ENCODE measurements at regions of chr5 and their contacts with region 1.

Region 1: DNA sequence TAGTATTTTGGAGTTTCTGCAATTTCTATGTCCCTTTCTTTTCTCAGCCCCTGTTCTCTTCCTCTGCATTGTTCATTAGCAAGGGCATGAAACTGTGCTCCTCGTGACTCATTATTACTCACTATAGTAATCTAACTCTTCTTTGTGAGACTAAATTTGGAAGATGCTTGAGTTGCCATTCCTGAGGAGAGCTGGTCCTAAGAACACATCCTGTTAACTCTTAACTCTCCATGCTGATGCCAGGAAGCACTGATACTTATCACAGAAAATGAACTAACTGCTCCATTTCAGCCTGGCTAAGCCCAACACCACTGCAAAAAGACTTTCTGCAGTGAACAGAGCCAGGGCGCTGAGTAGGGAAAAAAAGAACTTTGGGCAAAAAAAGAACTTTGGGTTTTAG is 10.6 kb upstream of the CSNK1A1 start:
- DNase-seq: no peak
- ATAC-seq: no peak
- H3K4me3 ChIP-seq: no peak overlapping the region
- H3K27ac ChIP-seq: no peak overlapping the region
- H3K4me1 ChIP-seq: no peaks in the 10 kb centered on the region
- H3K27me3 ChIP-seq: no peaks in the 10 kb centered on the region
- CTCF ChIP-seq: no peak
- EP300 ChIP-seq: no peak
- POLR2A ChIP-seq: no peak
- RAD21 ChIP-seq: no peak

Region 2: GRCh38 chr5:149317281-149318048 is 244.4 kb before region 1 on chr5:
- CTCF ChIA-PET with region 1: interaction called, 8 read pairs
- POLR2A ChIA-PET with region 1: no interaction called
- RAD21 ChIA-PET with region 1: interaction called, 8 read pairs
- SMC1A ChIA-PET with region 1: no interaction called
- in situ Hi-C with region 1: no loop called
- intact Hi-C with region 1: loop called (anchors 2 kb)
- DNase-seq: no peak
- ATAC-seq: peak; percentile 86
- H3K4me3 ChIP-seq: no peak overlapping the region
- H3K27ac ChIP-seq: no peak overlapping the region
- H3K4me1 ChIP-seq: no peaks in the 10 kb centered on the region
- H3K27me3 ChIP-seq: no peaks in the 10 kb centered on the region; a peak in 1 of 4 replicates
- CTCF ChIP-seq: peak; percentile 67 to 82 (median 72)
- EP300 ChIP-seq: no peak
- POLR2A ChIP-seq: no peak
- RAD21 ChIP-seq: peak; percentile 79

Region 3: GRCh38 chr5:149381987-149382340 is 179.9 kb before region 1 on chr5:
- CTCF ChIA-PET with region 1: interaction called, 35 read pairs
- POLR2A ChIA-PET with region 1: no interaction called
- RAD21 ChIA-PET with region 1: interaction called, 7 read pairs
- SMC1A ChIA-PET with region 1: interaction called, 7 read pairs
- in situ Hi-C with region 1: no loop called
- intact Hi-C with region 1: loop called (anchors 1 kb)
- DNase-seq: no peak
- ATAC-seq: peak; percentile 97
- H3K4me3 ChIP-seq: no peak overlapping the region
- H3K27ac ChIP-seq: no peak overlapping the region
- H3K4me1 ChIP-seq: no peaks in the 10 kb centered on the region
- H3K27me3 ChIP-seq: peaks cover 0 to 2% of the 10 kb centered on the region in 2 experiments; a peak in 2 of 4 replicates
- CTCF ChIP-seq: peak; percentile 83 to 90 (median 87)
- EP300 ChIP-seq: no peak
- POLR2A ChIP-seq: no peak
- RAD21 ChIP-seq: peak; percentile 69

Region 4: DNA sequence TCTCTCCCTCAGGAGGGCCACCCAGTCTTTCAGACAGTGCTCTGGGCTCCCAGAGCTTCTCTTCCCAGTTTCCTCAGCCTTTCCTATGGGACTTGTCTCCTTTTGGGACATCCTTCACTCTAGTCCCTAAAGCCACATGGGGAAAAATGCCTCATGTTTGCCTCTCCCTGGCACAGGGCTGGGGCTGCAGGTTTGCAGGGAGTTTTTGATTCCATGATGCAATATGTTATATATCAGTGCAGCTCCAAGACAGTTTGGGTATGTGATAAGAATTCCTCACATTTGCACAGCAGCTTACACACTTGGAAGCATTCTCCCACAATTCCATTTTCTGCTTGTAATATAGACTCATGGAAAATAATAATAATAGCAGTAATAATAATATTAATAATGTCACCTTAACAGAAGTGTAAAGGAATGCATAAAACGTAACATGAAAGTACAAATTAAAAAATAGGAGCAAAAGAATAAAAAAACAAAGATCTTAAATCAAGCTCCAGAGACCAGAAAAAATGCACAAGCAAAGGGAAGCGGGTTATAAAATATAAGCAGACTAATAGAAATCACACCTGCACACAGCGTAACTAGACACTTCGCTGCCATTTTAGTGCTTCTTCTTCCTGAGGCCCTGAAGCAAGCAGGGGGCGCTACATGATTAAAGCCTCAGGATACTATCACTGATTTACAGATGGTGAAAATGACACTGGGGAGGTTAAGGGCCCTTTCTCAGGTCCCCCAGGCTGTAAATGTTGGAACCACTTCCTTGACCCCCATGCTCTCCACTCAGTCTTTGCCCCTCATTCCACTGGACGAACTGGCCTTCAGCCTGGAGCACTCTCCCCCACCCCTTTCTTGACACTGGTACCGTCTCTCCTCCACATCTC is 112.8 kb before region 1 on chr5:
- CTCF ChIA-PET with region 1: interaction called, 68 read pairs
- POLR2A ChIA-PET with region 1: interaction called, 3 read pairs
- RAD21 ChIA-PET with region 1: interaction called, 9 read pairs
- SMC1A ChIA-PET with region 1: interaction called, 6 read pairs
- in situ Hi-C with region 1: loop called (anchors 5 kb)
- intact Hi-C with region 1: no loop called
- DNase-seq: no peak
- ATAC-seq: peak; percentile 54
- H3K4me3 ChIP-seq: no peak overlapping the region
- H3K27ac ChIP-seq: no peak overlapping the region
- H3K4me1 ChIP-seq: no peaks in the 10 kb centered on the region
- H3K27me3 ChIP-seq: no peaks in the 10 kb centered on the region
- CTCF ChIP-seq: peak; percentile 17 to 36 (median 18); a peak in 2 of 6 replicates
- EP300 ChIP-seq: no peak
- POLR2A ChIP-seq: no peak
- RAD21 ChIP-seq: peak; percentile 34

Region 5: GRCh38 chr5:149551200-149552037 is 10.4 kb before region 1 on chr5 and contains the start of gene CSNK1A1:
- CTCF ChIA-PET with region 1: interaction called, 12 read pairs
- POLR2A ChIA-PET with region 1: interaction called, 3 read pairs
- RAD21 ChIA-PET with region 1: interaction called, 5 read pairs
- SMC1A ChIA-PET with region 1: interaction called, 8 read pairs
- in situ Hi-C with region 1: no loop called
- intact Hi-C with region 1: no loop called
- DNase-seq: peak; percentile 98
- ATAC-seq: peak; percentile 91
- H3K4me3 ChIP-seq: peak within 1 kb of the TSS; percentile 82
- H3K27ac ChIP-seq: peak within 1 kb of the TSS; percentile 100
- H3K4me1 ChIP-seq: no peaks in the 10 kb centered on the region; the same call in 1 of the 2 replicates
- H3K27me3 ChIP-seq: no peaks in the 10 kb centered on the region
- CTCF ChIP-seq: peak; percentile 58 to 77 (median 69)
- EP300 ChIP-seq: 0 out of 4 replicates have a peak, but pooled peaks of 1 of the 2 experiments have one; percentile 23
- POLR2A ChIP-seq: peak; percentile 94
- RAD21 ChIP-seq: peak; percentile 51
- polyA plus RNA-seq, gene CSNK1A1: 53.3 to 62.0 TPM

Measured in GM12878 (cell line).